ENCODE measurements at regions of chr7 and their contacts with region 1.

Region 1: GRCh38 chr7:786472-787255 is 45.6 kb upstream of the SUN1 start:
- DNase-seq: no peak
- H3K4me3 ChIP-seq: no peak overlapping the region
- CTCF ChIP-seq: peak; percentile 97

Region 2: GRCh38 chr7:842431-843031 is 55.9 kb after region 1 on chr7:
- in situ Hi-C with region 1: loop called (anchors 5 kb)
- DNase-seq: no peak
- H3K4me3 ChIP-seq: no peak overlapping the region
- CTCF ChIP-seq: no peak

Region 3: GRCh38 chr7:894164-894867 is 107.7 kb after region 1 on chr7:
- in situ Hi-C with region 1: loop called (anchors 5 kb)
- DNase-seq: no peak
- H3K4me3 ChIP-seq: no peak overlapping the region
- CTCF ChIP-seq: no peak

Region 4: DNA sequence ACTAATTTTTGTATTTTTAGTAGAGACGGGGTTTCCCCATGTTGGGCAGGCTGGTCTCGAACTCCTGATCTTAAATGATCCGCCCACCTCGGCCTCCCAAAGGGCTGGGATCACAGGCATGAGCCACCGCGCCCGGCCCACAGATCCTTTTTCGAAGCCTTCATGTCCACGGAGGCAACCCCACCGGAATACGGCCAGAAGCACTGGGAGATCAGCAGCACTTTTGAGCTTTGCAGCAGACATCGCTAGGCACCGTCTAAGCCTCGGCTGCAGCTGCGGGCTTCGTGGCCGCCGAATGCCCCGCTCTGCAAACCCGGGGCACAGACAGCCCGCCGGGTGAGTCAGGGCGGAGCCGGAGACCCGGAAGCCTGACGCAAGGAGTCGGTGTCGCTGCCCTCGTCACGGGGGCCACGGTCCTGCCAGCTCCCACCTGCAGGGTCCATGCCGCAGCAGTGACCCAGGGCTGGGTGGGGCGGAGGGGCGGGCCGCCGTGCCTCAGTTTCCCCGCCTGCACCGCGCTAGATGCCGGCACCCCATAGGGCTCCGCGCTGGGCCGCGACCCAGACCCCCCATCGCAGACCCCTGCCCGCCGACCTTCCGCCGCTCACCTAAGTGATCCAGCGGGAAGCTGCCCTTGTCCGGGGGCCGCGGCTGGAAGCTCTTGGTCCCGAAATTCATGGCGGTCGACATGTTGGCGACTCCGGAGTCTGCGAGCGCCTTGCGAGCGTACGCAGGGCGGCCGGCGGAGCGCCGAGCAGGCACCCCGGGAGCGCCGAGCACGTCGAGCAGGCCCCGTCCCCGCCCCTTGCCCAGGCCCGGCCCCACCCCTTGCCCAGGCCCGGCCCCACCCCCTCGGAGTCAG is 188.4 kb after region 1 on chr7 and contains the start of gene COX19:
- in situ Hi-C with region 1: loop called (anchors 25 kb)
- DNase-seq: peak; percentile 72
- H3K4me3 ChIP-seq: peak within 1 kb of the TSS; percentile 97
- CTCF ChIP-seq: no peak